Colonic mucosa (tissue), 4 donors: ENCODE measurements at regions of chr16 and their contacts with region 1.

Region 1: GRCh38 chr16:58025351-58026138 is at the start of gene MMP15:
- DNase-seq: peak; percentile 95
- H3K4me3 ChIP-seq: peak within 1 kb of the TSS; percentile 96
- H3K27ac ChIP-seq: peak within 1 kb of the TSS; percentile 89
- H3K4me1 ChIP-seq: peaks cover 17% of the 10 kb centered on the region
- H3K27me3 ChIP-seq: no peaks in the 10 kb centered on the region
- CTCF ChIP-seq: no peak
- total RNA-seq, gene MMP15: 79.2 to 126 TPM

Region 2: GRCh38 chr16:57955572-57956188 is 69.9 kb before region 1 on chr16:
- intact Hi-C with region 1: no loop called
- DNase-seq: no peak
- H3K4me3 ChIP-seq: no peak overlapping the region
- H3K27ac ChIP-seq: no peak overlapping the region
- H3K4me1 ChIP-seq: no peaks in the 10 kb centered on the region
- H3K27me3 ChIP-seq: no peaks in the 10 kb centered on the region
- CTCF ChIP-seq: no peak

Region 3: DNA sequence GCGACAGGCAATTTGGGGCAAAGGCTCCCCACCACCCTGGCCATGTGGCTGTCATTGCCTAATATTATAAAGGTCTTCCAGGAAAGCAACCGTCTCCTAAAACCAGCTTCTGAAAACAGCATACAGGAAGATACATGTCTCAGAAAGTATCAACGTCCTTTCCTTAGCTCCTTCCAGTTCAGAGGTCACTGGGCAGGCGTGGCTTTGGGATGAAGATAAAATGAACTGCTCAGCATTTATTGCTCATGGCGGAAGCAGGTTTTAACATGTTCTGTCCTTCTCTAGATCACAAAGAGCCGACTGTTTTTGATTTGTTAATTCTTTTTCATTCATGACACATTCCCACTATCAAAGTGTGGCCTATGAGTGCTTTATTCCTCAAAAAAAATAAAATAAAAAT is 95.6 kb after region 1 on chr16:
- intact Hi-C with region 1: loop called (anchors 2 kb)
- DNase-seq: peak; percentile 65
- H3K4me3 ChIP-seq: no peak overlapping the region
- H3K27ac ChIP-seq: peak overlapping the region; percentile 63
- H3K4me1 ChIP-seq: peaks cover 19% of the 10 kb centered on the region
- H3K27me3 ChIP-seq: no peaks in the 10 kb centered on the region
- CTCF ChIP-seq: no peak

Region 4: DNA sequence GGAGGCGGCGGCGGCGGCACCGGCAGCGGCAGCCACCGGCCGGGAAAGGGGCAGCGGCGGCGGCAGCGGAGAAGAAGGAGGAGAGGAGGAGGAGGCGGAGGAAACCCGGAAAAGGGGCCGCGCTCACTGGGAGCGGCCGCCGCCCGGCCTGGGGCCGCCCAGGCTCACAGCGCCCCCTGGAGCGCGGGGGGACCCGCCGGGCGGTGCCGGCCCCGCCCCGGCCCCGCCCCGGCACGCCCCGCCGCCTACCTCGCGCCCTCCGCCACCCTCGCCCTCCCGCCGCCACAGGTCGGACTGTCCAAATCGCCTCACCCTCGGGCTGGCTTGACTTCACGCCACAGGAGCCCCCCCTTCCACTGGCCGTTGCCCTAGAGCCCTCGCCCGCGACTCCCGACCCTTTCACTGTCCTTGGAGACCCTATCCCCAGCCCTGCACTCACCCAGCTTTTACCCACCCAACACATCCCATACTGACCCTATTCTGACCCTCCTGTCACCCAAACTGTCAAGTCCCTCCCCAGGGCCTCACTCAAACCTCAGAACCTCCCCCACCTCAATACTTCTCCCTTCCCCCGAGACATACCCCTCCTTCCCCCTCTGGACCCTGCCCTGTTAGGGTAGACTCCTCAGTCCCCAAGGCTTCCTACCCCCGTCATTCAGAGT is 172.6 kb after region 1 on chr16 and contains the start of gene CSNK2A2:
- intact Hi-C with region 1: loop called (anchors 5 kb)
- DNase-seq: peak; percentile 69
- H3K4me3 ChIP-seq: peak within 1 kb of the TSS; percentile 69
- H3K27ac ChIP-seq: no peak within 1 kb of the TSS
- H3K4me1 ChIP-seq: no peaks in the 10 kb centered on the region
- H3K27me3 ChIP-seq: no peaks in the 10 kb centered on the region
- CTCF ChIP-seq: no peak
- total RNA-seq, gene CSNK2A2: 53.4 to 62.0 TPM

Region 5: GRCh38 chr16:58225964-58226602 is 200.5 kb after region 1 on chr16:
- intact Hi-C with region 1: no loop called
- DNase-seq: no peak
- H3K4me3 ChIP-seq: no peak overlapping the region
- H3K27ac ChIP-seq: no peak overlapping the region
- H3K4me1 ChIP-seq: no peaks in the 10 kb centered on the region
- H3K27me3 ChIP-seq: no peaks in the 10 kb centered on the region
- CTCF ChIP-seq: no peak

Region 6: GRCh38 chr16:58306327-58306726 is 280.8 kb after region 1 on chr16:
- intact Hi-C with region 1: loop called (anchors 5 kb)
- DNase-seq: peak; percentile 36
- H3K4me3 ChIP-seq: no peak overlapping the region
- H3K27ac ChIP-seq: no peak overlapping the region
- H3K4me1 ChIP-seq: no peaks in the 10 kb centered on the region
- H3K27me3 ChIP-seq: no peaks in the 10 kb centered on the region
- CTCF ChIP-seq: peak; percentile 47

Region 7: GRCh38 chr16:58399718-58400633 is 374.4 kb after region 1 on chr16:
- intact Hi-C with region 1: no loop called
- DNase-seq: no peak
- H3K4me3 ChIP-seq: no peak overlapping the region
- H3K27ac ChIP-seq: no peak overlapping the region
- H3K4me1 ChIP-seq: no peaks in the 10 kb centered on the region
- H3K27me3 ChIP-seq: no peaks in the 10 kb centered on the region
- CTCF ChIP-seq: no peak